ENCODE measurements at regions of chr2 and their contacts with region 1.

Region 1: GRCh38 chr2:156892467-156893281 is 364.8 kb upstream of the GALNT5 start:
- DNase-seq: no peak
- H3K4me3 ChIP-seq: no peak overlapping the region
- CTCF ChIP-seq: no peak
- POLR2A ChIP-seq: no peak

Region 2: DNA sequence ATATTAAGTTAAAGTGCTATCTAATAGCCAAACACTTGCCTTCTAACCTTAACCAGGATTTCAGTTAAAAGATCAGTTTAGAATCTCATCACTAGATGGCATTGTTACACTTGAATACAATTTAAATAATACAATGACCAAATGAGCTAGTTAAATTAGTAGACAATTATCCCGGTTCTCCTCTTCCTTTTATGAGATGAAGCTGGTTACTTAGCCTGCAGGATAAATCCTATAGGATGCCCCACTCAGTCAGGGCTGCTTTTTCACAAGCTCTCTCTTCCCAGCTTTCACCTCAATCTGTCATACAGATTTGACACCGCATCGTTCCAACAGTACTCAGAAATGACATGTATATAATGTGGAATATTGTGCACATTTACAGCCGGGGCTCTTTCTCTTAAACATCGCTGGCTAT is 1515.4 kb before region 1 on chr2:
- intact Hi-C with region 1: loop called (anchors 10 kb)
- DNase-seq: no peak
- H3K4me3 ChIP-seq: no peak overlapping the region
- CTCF ChIP-seq: no peak
- POLR2A ChIP-seq: no peak

Region 3: GRCh38 chr2:157125190-157125589 is 232.5 kb after region 1 on chr2:
- intact Hi-C with region 1: no loop called
- DNase-seq: no peak
- H3K4me3 ChIP-seq: no peak overlapping the region
- CTCF ChIP-seq: no peak
- POLR2A ChIP-seq: no peak

Measured in lower leg skin (tissue), 4 donors.